Ascending aorta (tissue), 2 donors: ENCODE measurements at regions of chr1 and their contacts with region 1.

Region 1: GRCh38 chr1:181152892-181153633 is 64.6 kb downstream of the IER5 start:
- DNase-seq: peak; percentile 72 to 95
- H3K4me3 ChIP-seq: peak overlapping the region in 1 of 2 donors; percentile 5
- H3K27ac ChIP-seq: peak overlapping the region; percentile 81 to 92
- H3K4me1 ChIP-seq: peaks cover 8 to 20% of the 10 kb centered on the region in 2 donors
- H3K27me3 ChIP-seq: no peaks in the 10 kb centered on the region
- CTCF ChIP-seq: peak in 2 of 3 experiments; percentile 31 to 45

Region 2: GRCh38 chr1:180502360-180503273 is 650.4 kb before region 1 on chr1 and contains the start of gene ACBD6:
- intact Hi-C with region 1: loop called (anchors 5 kb)
- DNase-seq: peak; percentile 24 to 88
- H3K4me3 ChIP-seq: peak within 1 kb of the TSS; percentile 80 to 86
- H3K27ac ChIP-seq: peak within 1 kb of the TSS; percentile 82 to 87
- H3K4me1 ChIP-seq: peaks cover 0 to 11% of the 10 kb centered on the region in 2 donors
- H3K27me3 ChIP-seq: no peaks in the 10 kb centered on the region
- CTCF ChIP-seq: peak in 2 of 3 experiments; percentile 12 to 13
- total RNA-seq, gene ACBD6: 67.7 TPM

Region 3: GRCh38 chr1:180515864-180516388 is 637.1 kb before region 1 on chr1:
- intact Hi-C with region 1: loop called (anchors 5 kb)
- DNase-seq: peak in 1 of 2 donors; percentile 79
- H3K4me3 ChIP-seq: no peak overlapping the region
- H3K27ac ChIP-seq: no peak overlapping the region
- H3K4me1 ChIP-seq: peaks cover 0 to 8% of the 10 kb centered on the region in 2 donors
- H3K27me3 ChIP-seq: no peaks in the 10 kb centered on the region
- CTCF ChIP-seq: peak; percentile 72 to 92 (median 79)

Region 4: DNA sequence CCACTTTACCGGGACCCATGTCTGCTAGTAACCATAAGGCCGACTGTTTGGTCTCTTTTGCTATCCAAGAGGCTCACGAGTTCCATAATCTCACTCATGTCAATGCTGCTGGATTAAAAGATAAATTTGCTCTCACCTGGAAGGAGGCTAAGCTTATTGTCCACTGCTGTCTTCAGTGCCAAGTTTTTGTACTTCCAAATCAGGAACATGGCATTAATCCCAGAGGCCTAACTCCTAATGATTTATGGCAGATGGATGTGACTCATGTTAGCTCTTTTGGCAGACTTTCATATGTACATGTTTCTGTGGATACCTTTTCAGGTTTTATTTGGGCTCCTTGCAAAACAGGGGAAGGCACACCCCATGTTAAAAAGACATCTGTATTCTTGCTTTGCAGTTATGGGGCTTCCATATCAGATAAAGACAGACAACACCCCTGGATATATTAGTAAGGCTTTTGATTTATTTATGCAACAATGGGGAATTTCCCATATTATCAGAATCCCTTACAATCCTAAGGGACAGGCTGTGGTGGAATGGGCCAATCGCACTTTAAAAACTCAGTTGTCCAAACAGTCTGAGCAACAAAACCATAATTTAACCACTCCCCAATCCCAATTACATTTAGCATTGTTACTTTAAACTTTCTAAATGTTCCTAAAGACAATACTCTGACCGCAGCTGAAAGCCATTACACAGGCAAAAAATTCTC is 98.1 kb after region 1 on chr1:
- intact Hi-C with region 1: no loop called
- DNase-seq: no peak
- H3K4me3 ChIP-seq: no peak overlapping the region
- H3K27ac ChIP-seq: no peak overlapping the region
- H3K4me1 ChIP-seq: no peaks in the 10 kb centered on the region
- H3K27me3 ChIP-seq: no peaks in the 10 kb centered on the region
- CTCF ChIP-seq: no peak